Caco-2 (cell line): ENCODE measurements at regions of chr2 and their contacts with region 1.

Region 1: GRCh38 chr2:45649858-45650811 is 1.3 kb upstream of the PRKCE start:
- DNase-seq: peak; percentile 77 to 80
- H3K4me3 ChIP-seq: peak overlapping the region; percentile 70
- H3K4me3 Mint-ChIP-seq: peak overlapping the region; percentile 91
- H3K27ac Mint-ChIP-seq: peak overlapping the region; percentile 82
- H3K4me1 ChIP-seq: peaks cover 5% of the 10 kb centered on the region; the same call in 1 of the 2 replicates
- H3K4me1 Mint-ChIP-seq: peaks cover 14% of the 10 kb centered on the region
- H3K27me3 ChIP-seq: no peaks in the 10 kb centered on the region
- H3K27me3 Mint-ChIP-seq: peaks cover 13% of the 10 kb centered on the region
- CTCF ChIP-seq: no peak

Region 2: DNA sequence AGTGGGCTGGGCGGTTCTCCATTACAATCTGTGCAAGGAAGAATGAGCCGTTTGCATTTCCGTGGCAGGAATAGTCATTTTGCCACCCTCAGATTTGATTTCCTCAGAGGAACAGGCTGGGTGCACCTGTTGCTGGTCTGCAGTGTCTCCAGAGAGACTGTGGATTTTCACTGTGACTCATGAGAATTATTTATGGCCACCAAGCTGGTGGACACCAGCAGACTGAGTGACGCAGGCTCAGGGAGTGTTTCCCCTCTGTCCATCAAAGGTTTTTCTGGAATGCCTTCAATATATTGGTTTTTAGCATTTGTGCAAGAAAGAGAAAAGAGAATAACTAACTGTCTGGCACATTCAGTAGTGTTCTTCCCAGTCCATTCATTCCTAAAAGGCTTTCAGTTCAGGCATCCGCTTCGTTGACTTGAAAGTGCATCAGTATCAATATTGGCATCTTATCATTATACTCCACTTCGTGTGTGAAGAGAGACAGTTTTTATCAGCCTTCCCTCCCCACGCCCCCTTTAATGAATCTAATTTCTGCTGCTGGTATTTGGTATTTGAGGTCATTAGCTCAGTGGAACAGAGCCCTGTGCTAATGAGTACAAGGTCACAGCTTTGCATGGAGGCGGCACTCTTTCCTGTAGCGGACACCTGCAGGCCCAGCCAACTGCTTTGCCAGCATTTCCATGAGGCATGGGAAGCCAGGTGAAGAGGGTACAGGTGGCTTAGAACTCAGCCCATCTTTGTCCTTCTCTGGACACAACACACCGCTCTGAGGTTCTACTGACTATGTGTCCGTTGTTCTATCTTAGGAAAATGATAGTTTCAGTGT is 41.2 kb after region 1 on chr2:
- CTCF ChIA-PET with region 1: no interaction called
- POLR2A ChIA-PET with region 1: no interaction called
- intact Hi-C with region 1: no loop called
- DNase-seq: no peak
- H3K4me3 ChIP-seq: no peak overlapping the region
- H3K4me3 Mint-ChIP-seq: no peak overlapping the region
- H3K27ac Mint-ChIP-seq: no peak overlapping the region
- H3K4me1 ChIP-seq: peaks cover 7% of the 10 kb centered on the region
- H3K4me1 Mint-ChIP-seq: no peaks in the 10 kb centered on the region
- H3K27me3 ChIP-seq: no peaks in the 10 kb centered on the region
- H3K27me3 Mint-ChIP-seq: no peaks in the 10 kb centered on the region
- CTCF ChIP-seq: no peak

Region 3: GRCh38 chr2:45872211-45872610 is 222.1 kb after region 1 on chr2:
- CTCF ChIA-PET with region 1: interaction called, 3 read pairs
- POLR2A ChIA-PET with region 1: no interaction called
- intact Hi-C with region 1: loop called (anchors 2 kb)
- DNase-seq: no peak
- H3K4me3 ChIP-seq: no peak overlapping the region
- H3K4me3 Mint-ChIP-seq: no peak overlapping the region
- H3K27ac Mint-ChIP-seq: no peak overlapping the region
- H3K4me1 ChIP-seq: peaks cover 11% of the 10 kb centered on the region
- H3K4me1 Mint-ChIP-seq: peaks cover 20% of the 10 kb centered on the region
- H3K27me3 ChIP-seq: no peaks in the 10 kb centered on the region; the same call in 1 of the 2 replicates
- H3K27me3 Mint-ChIP-seq: no peaks in the 10 kb centered on the region
- CTCF ChIP-seq: no peak